ENCODE measurements at regions of chr2 and their contacts with region 1.

Region 1: GRCh38 chr2:27765621-27766269 is 5.8 kb upstream of the MRPL33 start:
- DNase-seq: peak; percentile 93 to 97
- H3K4me3 ChIP-seq: peak overlapping the region; percentile 39
- H3K27ac ChIP-seq: peak overlapping the region; percentile 89
- H3K4me1 ChIP-seq: peaks cover 65% of the 10 kb centered on the region
- H3K27me3 ChIP-seq: no peaks in the 10 kb centered on the region
- CTCF ChIP-seq: no peak

Region 2: GRCh38 chr2:27723372-27724144 is 42.2 kb before region 1 on chr2:
- CTCF ChIA-PET with region 1: no interaction called
- POLR2A ChIA-PET with region 1: interaction called, 3 read pairs
- intact Hi-C with region 1: loop called (anchors 1 kb)
- DNase-seq: peak; percentile 52 to 55
- H3K4me3 ChIP-seq: no peak overlapping the region
- H3K27ac ChIP-seq: peak overlapping the region; percentile 92
- H3K4me1 ChIP-seq: peaks cover 64% of the 10 kb centered on the region
- H3K27me3 ChIP-seq: no peaks in the 10 kb centered on the region
- CTCF ChIP-seq: peak; percentile 91

Region 3: DNA sequence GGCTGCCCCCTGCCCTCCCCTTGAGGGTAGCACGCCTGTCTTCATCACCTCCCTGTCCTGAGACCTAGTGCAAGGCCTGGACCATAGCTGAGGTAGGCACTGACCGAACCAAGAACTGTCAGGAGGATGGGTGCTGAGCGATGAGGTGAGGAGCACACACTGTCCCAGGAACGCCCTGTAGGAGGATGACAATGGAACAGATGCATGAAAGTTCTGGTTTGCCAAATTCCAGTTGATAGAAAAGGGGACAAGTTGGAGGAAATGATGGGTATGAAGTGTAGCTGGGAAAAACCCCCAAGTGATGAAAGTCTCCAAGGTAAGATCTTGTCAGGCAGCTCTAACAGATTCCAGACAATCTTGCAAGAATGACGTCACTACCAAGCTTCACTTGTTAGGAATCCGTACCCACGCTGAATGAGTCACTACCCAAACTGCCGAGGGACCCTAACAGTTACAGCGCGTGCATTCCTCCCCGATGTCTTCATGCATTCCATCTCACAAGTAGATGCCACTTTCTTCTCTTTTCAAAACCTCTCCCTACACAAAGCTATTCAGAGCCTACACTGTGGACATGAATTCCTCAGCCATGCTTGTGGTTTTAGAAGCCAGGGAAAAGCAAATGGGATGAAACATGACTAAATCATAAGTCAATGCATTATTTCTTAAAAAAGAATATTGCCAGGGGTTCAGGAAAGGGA is 33.4 kb after region 1 on chr2:
- CTCF ChIA-PET with region 1: no interaction called
- POLR2A ChIA-PET with region 1: no interaction called
- intact Hi-C with region 1: loop called (anchors 1 kb)
- DNase-seq: peak; percentile 89 to 100
- H3K4me3 ChIP-seq: peak overlapping the region; percentile 3; the same call in 1 of the 2 replicates
- H3K27ac ChIP-seq: peak overlapping the region; percentile 94
- H3K4me1 ChIP-seq: peaks cover 40% of the 10 kb centered on the region
- H3K27me3 ChIP-seq: no peaks in the 10 kb centered on the region
- CTCF ChIP-seq: no peak

Region 4: GRCh38 chr2:27890146-27890923 is 124.6 kb after region 1 on chr2 and contains the starts of genes BABAM2 and RBKS:
- CTCF ChIA-PET with region 1: no interaction called
- POLR2A ChIA-PET with region 1: interaction called, 4 read pairs
- intact Hi-C with region 1: loop called (anchors 1 kb)
- DNase-seq: peak; percentile 75 to 91
- H3K4me3 ChIP-seq: peak within 1 kb of the TSS; percentile 81
- H3K27ac ChIP-seq: peak within 1 kb of the TSS; percentile 96
- H3K4me1 ChIP-seq: peaks cover 41% of the 10 kb centered on the region
- H3K27me3 ChIP-seq: no peaks in the 10 kb centered on the region
- CTCF ChIP-seq: no peak
- total RNA-seq, gene BABAM2: 45.9 and 46.1 TPM in 2 replicates
- total RNA-seq, gene RBKS: 4.5 and 6.8 TPM in 2 replicates

Region 5: DNA sequence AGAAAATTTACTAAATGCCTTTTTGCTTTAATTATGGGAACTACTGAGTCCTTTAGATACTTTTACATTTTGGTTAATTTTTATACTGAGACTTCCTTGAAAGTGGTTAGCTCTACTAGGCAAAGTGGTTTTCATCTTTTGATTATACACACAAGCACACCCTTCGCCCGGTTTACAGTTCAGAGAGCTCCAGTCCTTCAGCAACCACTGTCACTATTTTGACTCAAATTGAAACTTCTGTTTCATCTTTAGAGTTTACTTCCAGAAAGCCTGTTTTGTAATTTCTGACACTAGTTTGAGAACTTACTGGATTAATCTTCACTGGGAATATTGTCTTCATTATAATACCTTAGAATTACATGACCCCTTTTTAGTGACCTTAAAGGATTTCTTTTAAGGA is 486.6 kb after region 1 on chr2:
- CTCF ChIA-PET with region 1: no interaction called
- POLR2A ChIA-PET with region 1: no interaction called
- intact Hi-C with region 1: loop called (anchors 1 kb)
- DNase-seq: no peak
- H3K4me3 ChIP-seq: no peak overlapping the region
- H3K27ac ChIP-seq: no peak overlapping the region
- H3K4me1 ChIP-seq: peaks cover 20% of the 10 kb centered on the region
- H3K27me3 ChIP-seq: no peaks in the 10 kb centered on the region
- CTCF ChIP-seq: no peak